Breast epithelium (tissue), 4 donors: ENCODE measurements at regions of chr12 and their contacts with region 1.

Region 1: DNA sequence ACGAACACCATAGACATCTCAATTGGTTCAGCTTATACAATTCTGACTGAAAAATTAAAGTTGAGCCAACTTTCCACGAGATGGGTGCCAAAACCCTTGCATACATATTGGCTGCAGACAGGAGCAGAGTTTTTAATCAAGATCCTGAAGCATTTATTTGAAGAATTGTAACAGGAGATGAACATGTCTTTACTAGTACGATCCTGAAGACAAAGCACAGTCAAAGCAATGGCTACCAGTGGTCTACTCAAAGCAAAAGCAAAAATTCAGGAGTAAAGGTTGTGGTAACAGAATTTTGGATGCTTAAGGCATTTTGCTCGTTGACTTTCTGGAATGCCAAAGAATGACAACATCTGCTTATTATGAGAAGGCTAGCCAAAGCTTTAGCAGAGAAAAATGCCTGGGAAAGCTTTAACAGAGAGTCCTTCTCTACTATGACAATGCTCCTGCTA is 20.7 kb downstream of the ZDHHC17 start:
- DNase-seq: no peak
- H3K4me3 ChIP-seq: peak overlapping the region in 2 of 3 donors; percentile 9 to 13
- H3K27ac ChIP-seq: peak overlapping the region; percentile 66 to 83
- H3K4me1 ChIP-seq: no peaks in the 10 kb centered on the region
- H3K27me3 ChIP-seq: no peaks in the 10 kb centered on the region
- CTCF ChIP-seq: no peak
- POLR2A ChIP-seq: no peak

Region 2: GRCh38 chr12:76621582-76622024 is 163.0 kb before region 1 on chr12:
- intact Hi-C with region 1: loop called (anchors 10 kb)
- DNase-seq: peak; percentile 61 to 70
- H3K4me3 ChIP-seq: no peak overlapping the region
- H3K27ac ChIP-seq: no peak overlapping the region
- H3K4me1 ChIP-seq: no peaks in the 10 kb centered on the region
- H3K27me3 ChIP-seq: no peaks in the 10 kb centered on the region
- CTCF ChIP-seq: peak; percentile 94 to 98 (median 94)
- POLR2A ChIP-seq: no peak